Panc1 (cell line): ENCODE measurements at regions of chr1 and their contacts with region 1.

Region 1: GRCh38 chr1:23691499-23692307 is at the start of gene RPL11:
- DNase-seq: peak; percentile 94
- ATAC-seq: peak; percentile 100
- H3K4me3 ChIP-seq: peak within 1 kb of the TSS; percentile 100
- H3K27ac ChIP-seq: peak within 1 kb of the TSS; percentile 100
- H3K4me1 ChIP-seq: peaks cover 26% of the 10 kb centered on the region
- H3K27me3 ChIP-seq: no peaks in the 10 kb centered on the region
- CTCF ChIP-seq: peak; percentile 87
- total RNA-seq, gene RPL11: 865 TPM

Region 2: DNA sequence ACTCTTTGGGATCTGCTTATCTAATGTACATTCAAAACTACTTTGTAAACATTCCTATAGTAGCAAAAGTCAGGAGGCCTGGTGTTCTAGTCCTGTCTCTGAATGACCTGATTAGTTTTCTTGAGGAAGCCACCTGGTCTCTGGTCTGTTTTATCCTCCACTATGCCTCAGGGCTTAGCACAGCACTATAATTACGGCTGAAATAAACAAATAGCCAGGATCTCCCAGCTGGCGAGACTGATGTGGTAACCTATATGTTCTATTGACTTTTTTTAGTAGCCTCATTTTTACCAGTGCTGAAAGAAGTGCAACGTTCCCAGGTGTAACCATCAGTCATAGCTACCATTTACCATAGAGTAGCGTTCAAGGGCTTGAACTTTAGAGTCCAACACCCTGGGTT is 24.3 kb before region 1 on chr1:
- CTCF ChIA-PET with region 1: no interaction called
- POLR2A ChIA-PET with region 1: interaction called, 11 read pairs
- in situ Hi-C with region 1: no loop called
- intact Hi-C with region 1: no loop called
- DNase-seq: no peak
- ATAC-seq: no peak
- H3K4me3 ChIP-seq: no peak overlapping the region
- H3K27ac ChIP-seq: no peak overlapping the region
- H3K4me1 ChIP-seq: no peaks in the 10 kb centered on the region
- H3K27me3 ChIP-seq: no peaks in the 10 kb centered on the region
- CTCF ChIP-seq: no peak

Region 3: GRCh38 chr1:23757812-23758211 is 66.1 kb after region 1 on chr1:
- CTCF ChIA-PET with region 1: no interaction called
- POLR2A ChIA-PET with region 1: interaction called, 14 read pairs
- in situ Hi-C with region 1: no loop called
- intact Hi-C with region 1: no loop called
- DNase-seq: no peak
- ATAC-seq: no peak
- H3K4me3 ChIP-seq: no peak overlapping the region
- H3K27ac ChIP-seq: no peak overlapping the region
- H3K4me1 ChIP-seq: no peaks in the 10 kb centered on the region
- H3K27me3 ChIP-seq: no peaks in the 10 kb centered on the region
- CTCF ChIP-seq: no peak

Region 4: GRCh38 chr1:23916209-23917131 is 224.8 kb after region 1 on chr1:
- CTCF ChIA-PET with region 1: no interaction called
- POLR2A ChIA-PET with region 1: no interaction called
- in situ Hi-C with region 1: no loop called
- intact Hi-C with region 1: no loop called
- DNase-seq: peak; percentile 51
- ATAC-seq: peak; percentile 97
- H3K4me3 ChIP-seq: no peak overlapping the region
- H3K27ac ChIP-seq: no peak overlapping the region
- H3K4me1 ChIP-seq: no peaks in the 10 kb centered on the region
- H3K27me3 ChIP-seq: no peaks in the 10 kb centered on the region
- CTCF ChIP-seq: peak; percentile 85